ENCODE measurements at regions of chr18 and their contacts with region 1.

Region 1: DNA sequence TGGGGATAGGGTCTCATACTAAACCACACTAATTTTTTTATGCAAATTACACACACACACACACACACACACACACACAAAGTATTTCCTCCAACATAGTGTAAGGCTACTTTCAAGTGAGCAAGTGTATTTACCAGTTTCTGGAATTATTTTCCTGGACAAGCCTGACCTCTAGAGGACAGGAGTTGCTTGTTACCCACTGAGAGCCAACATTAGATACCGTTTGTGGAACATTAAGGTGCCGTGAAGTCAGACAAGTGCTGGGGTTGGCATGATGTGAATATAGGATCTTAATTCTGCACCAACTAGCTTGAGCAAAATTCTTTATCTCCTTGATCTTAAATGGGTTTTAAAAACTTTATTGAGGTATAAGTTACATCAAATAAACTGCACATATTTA is 39.3 kb upstream of the SERPINB2 start:
- DNase-seq: no peak
- ATAC-seq: no peak
- H3K4me3 ChIP-seq: no peak overlapping the region
- H3K27ac ChIP-seq: no peak overlapping the region
- H3K4me1 ChIP-seq: no peaks in the 10 kb centered on the region
- H3K27me3 ChIP-seq: peaks cover 0 to 2% (median 0%) of the 10 kb centered on the region in 3 donors
- CTCF ChIP-seq: peak in 1 of 5 experiments; percentile 10
- POLR2A ChIP-seq: no peak

Region 2: GRCh38 chr18:63808125-63808524 is 40.0 kb before region 1 on chr18:
- in situ Hi-C with region 1: no loop called
- intact Hi-C with region 1: no loop called
- DNase-seq: no peak
- ATAC-seq: no peak
- H3K4me3 ChIP-seq: no peak overlapping the region
- H3K27ac ChIP-seq: no peak overlapping the region
- H3K4me1 ChIP-seq: no peaks in the 10 kb centered on the region
- H3K27me3 ChIP-seq: no peaks in the 10 kb centered on the region
- CTCF ChIP-seq: no peak
- POLR2A ChIP-seq: no peak

Region 3: GRCh38 chr18:63936156-63936931 is 88.2 kb after region 1 on chr18:
- in situ Hi-C with region 1: loop called in 1 of 4 experiments (anchors 25 kb)
- intact Hi-C with region 1: no loop called
- DNase-seq: peak; percentile 45 to 47
- ATAC-seq: peak in 1 of 2 donors; percentile 64
- H3K4me3 ChIP-seq: peak overlapping the region; percentile 38 to 57 (median 50)
- H3K27ac ChIP-seq: no peak overlapping the region
- H3K4me1 ChIP-seq: peaks cover 0 to 3% of the 10 kb centered on the region in 2 donors
- H3K27me3 ChIP-seq: no peaks in the 10 kb centered on the region
- CTCF ChIP-seq: peak; percentile 26 to 63 (median 54)
- POLR2A ChIP-seq: no peak